ENCODE measurements at regions of chr5 and their contacts with region 1.

Region 1: DNA sequence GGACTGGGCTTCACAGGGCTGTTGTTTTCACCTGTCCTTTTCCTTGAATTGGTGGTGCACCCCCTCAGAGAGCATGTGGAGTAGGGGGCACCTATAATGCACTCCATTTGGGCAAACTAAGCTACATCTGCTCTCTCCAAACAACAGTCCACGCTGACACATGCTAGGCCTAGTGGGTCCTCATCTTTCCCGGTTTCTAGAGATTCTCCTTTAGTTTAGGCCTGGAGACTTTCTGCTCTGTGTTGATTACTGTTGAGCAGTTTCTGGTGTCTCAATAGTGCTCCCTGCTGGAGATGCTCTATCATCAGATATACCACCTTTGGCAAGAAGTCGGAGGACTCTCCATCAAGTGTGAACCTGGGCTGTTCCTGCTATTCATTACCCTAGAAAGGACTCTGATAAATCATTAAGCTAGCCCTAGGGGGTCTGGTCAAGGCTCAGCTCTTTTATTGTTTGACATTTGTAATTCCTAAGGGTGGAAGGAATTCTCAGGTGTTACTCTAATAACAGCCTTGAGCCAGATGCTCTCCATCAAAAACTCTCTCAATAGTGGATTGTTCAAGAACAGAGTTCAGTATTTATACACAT is 64.0 kb upstream of the FYB1 start:
- DNase-seq: peak; percentile 5 to 90 (median 50)
- ATAC-seq: peak; percentile 100
- H3K4me3 ChIP-seq: no peak overlapping the region
- H3K4me3 Mint-ChIP-seq: peak overlapping the region; percentile 17
- H3K27ac ChIP-seq: no peak overlapping the region
- H3K27ac Mint-ChIP-seq: peak overlapping the region; percentile 67
- H3K4me1 ChIP-seq: peaks cover 9% of the 10 kb centered on the region
- H3K4me1 Mint-ChIP-seq: peaks cover 41% of the 10 kb centered on the region
- H3K27me3 ChIP-seq: no peaks in the 10 kb centered on the region
- H3K27me3 Mint-ChIP-seq: peaks cover 9% of the 10 kb centered on the region
- CTCF ChIP-seq: peak; percentile 81

Region 2: DNA sequence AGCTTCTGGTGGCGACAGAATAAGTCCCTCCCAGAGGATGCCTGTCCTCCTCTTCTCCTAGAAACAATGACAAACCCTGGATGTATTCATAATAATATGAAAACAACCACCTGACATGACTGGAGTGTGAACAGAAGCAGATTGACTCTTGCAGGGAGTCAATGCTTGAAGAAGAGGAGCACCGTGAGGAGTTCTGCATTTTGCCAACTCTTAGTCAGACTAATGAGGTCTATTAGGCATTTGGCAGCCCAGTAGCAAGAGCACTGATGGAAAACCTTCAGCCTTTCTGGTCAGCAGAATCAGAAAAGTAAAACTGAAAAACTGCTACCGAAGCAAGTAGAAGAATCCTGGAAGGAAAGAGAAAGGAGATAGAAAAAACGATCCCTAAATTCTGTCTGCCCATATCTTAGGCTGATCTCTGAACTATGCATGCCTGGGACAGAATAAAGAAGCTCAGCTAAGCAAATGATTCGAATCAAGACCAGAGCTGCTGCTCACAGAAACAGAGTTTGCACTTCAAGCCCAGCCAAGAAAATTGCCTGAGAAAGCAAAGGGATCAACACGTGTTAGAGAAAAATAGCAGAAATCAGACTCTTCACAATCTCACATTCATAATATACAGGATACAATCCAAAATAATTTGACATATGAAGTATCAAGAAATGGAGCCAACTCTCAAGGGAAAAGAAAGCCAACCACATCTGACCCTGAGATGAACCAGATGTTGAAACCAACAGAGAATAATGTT is 507.0 kb before region 1 on chr5:
- CTCF ChIA-PET with region 1: no interaction called
- POLR2A ChIA-PET with region 1: no interaction called
- intact Hi-C with region 1: no loop called
- DNase-seq: no peak
- ATAC-seq: no peak
- H3K4me3 ChIP-seq: no peak overlapping the region
- H3K4me3 Mint-ChIP-seq: no peak overlapping the region
- H3K27ac ChIP-seq: no peak overlapping the region
- H3K27ac Mint-ChIP-seq: no peak overlapping the region
- H3K4me1 ChIP-seq: no peaks in the 10 kb centered on the region
- H3K4me1 Mint-ChIP-seq: no peaks in the 10 kb centered on the region
- H3K27me3 ChIP-seq: peaks cover 0 to 3% of the 10 kb centered on the region in 2 experiments
- H3K27me3 Mint-ChIP-seq: peaks cover 33% of the 10 kb centered on the region
- CTCF ChIP-seq: no peak

Region 3: GRCh38 chr5:39005566-39006232 is 277.6 kb before region 1 on chr5:
- CTCF ChIA-PET with region 1: no interaction called
- POLR2A ChIA-PET with region 1: no interaction called
- intact Hi-C with region 1: loop called (anchors 2 to 10 kb)
- DNase-seq: peak in 4 of 14 experiments; percentile 20 to 59 (median 48)
- ATAC-seq: peak; percentile 86
- H3K4me3 ChIP-seq: no peak overlapping the region
- H3K4me3 Mint-ChIP-seq: no peak overlapping the region
- H3K27ac ChIP-seq: no peak overlapping the region
- H3K27ac Mint-ChIP-seq: peak overlapping the region; percentile 64
- H3K4me1 ChIP-seq: peaks cover 4% of the 10 kb centered on the region
- H3K4me1 Mint-ChIP-seq: peaks cover 61% of the 10 kb centered on the region
- H3K27me3 ChIP-seq: no peaks in the 10 kb centered on the region
- H3K27me3 Mint-ChIP-seq: no peaks in the 10 kb centered on the region
- CTCF ChIP-seq: peak; percentile 64

Region 4: GRCh38 chr5:39138892-39139291 is 144.4 kb before region 1 on chr5:
- CTCF ChIA-PET with region 1: interaction called, 6 read pairs
- POLR2A ChIA-PET with region 1: interaction called, 3 read pairs
- intact Hi-C with region 1: loop called in 1 of 2 experiments (anchors 1 kb)
- DNase-seq: no peak
- ATAC-seq: no peak
- H3K4me3 ChIP-seq: no peak overlapping the region
- H3K4me3 Mint-ChIP-seq: no peak overlapping the region
- H3K27ac ChIP-seq: no peak overlapping the region
- H3K27ac Mint-ChIP-seq: peak overlapping the region; percentile 73
- H3K4me1 ChIP-seq: no peaks in the 10 kb centered on the region
- H3K4me1 Mint-ChIP-seq: peaks cover 36% of the 10 kb centered on the region
- H3K27me3 ChIP-seq: no peaks in the 10 kb centered on the region
- H3K27me3 Mint-ChIP-seq: no peaks in the 10 kb centered on the region
- CTCF ChIP-seq: no peak

Region 5: GRCh38 chr5:39148983-39149534 is 134.3 kb before region 1 on chr5:
- CTCF ChIA-PET with region 1: interaction called, 10 read pairs
- POLR2A ChIA-PET with region 1: interaction called, 3 read pairs
- intact Hi-C with region 1: loop called (anchors 1 kb)
- DNase-seq: peak in 3 of 14 experiments; percentile 62 to 74 (median 70)
- ATAC-seq: peak; percentile 62
- H3K4me3 ChIP-seq: no peak overlapping the region
- H3K4me3 Mint-ChIP-seq: peak overlapping the region; percentile 0
- H3K27ac ChIP-seq: peak overlapping the region; percentile 58 to 61
- H3K27ac Mint-ChIP-seq: peak overlapping the region; percentile 86
- H3K4me1 ChIP-seq: peaks cover 51% of the 10 kb centered on the region
- H3K4me1 Mint-ChIP-seq: peaks cover 80% of the 10 kb centered on the region
- H3K27me3 ChIP-seq: no peaks in the 10 kb centered on the region
- H3K27me3 Mint-ChIP-seq: no peaks in the 10 kb centered on the region
- CTCF ChIP-seq: peak; percentile 66

Region 6: DNA sequence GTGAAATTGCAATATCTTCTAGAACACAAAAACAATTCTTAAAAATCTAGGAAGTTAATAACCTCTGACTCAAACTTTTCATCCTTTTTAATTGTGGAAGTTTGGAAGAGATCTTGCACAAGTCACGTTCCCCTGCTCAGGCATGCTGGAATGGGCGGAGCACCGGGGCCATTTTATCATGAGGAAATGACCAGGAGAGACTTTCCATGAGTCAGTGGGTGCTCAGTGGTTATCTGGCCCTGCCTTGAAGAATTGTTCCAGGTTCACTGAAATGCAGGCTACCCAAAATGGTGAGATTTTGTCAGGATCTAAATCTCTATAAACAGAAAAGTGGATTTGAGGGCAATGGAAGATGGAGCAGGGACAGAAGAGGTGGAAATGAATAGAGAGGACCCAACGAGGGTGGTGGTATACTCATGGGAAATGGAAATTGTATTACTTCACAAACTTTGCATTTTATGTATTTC is 125.2 kb before region 1 on chr5:
- CTCF ChIA-PET with region 1: interaction called, 16 read pairs
- POLR2A ChIA-PET with region 1: interaction called, 3 read pairs
- intact Hi-C with region 1: no loop called
- DNase-seq: peak in 2 of 14 experiments; percentile 28 to 31
- ATAC-seq: no peak
- H3K4me3 ChIP-seq: no peak overlapping the region
- H3K4me3 Mint-ChIP-seq: peak overlapping the region; percentile 69
- H3K27ac ChIP-seq: peak overlapping the region; percentile 7 to 55
- H3K27ac Mint-ChIP-seq: peak overlapping the region; percentile 96
- H3K4me1 ChIP-seq: peaks cover 54% of the 10 kb centered on the region
- H3K4me1 Mint-ChIP-seq: peaks cover 91% of the 10 kb centered on the region
- H3K27me3 ChIP-seq: no peaks in the 10 kb centered on the region
- H3K27me3 Mint-ChIP-seq: no peaks in the 10 kb centered on the region
- CTCF ChIP-seq: no peak

Region 7: DNA sequence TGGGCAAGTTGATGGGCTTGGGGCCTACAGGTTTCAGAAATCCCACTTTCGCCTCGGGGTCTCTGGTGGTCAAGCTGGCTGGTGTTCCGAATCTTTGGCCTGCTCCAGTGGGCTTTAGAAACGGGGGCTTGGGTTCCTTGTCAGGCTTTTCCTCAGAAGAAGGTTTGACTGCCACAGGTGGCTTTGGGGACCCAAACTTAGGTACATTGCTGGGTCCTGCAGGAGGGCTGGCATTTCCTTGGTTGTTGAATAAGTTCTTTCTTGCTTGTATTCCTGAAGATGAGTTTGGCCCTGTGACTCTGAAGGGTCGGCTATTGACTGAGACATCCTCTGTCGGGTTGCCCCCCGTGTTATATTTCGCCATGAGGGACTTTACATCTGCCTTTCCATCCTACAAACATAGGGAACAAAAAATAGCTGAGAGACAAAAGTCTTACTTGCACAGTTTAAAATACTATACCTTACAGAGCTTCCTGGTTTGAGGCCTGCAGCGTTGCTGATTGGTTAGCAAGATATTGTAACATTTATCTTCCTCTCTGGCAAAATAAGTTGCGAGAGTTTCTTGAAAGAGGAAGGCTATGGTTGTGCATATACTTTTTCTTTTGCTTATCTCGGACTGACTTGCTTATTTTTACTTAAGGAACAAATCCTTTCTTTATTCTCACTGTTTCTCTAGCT is 80.6 kb before region 1 on chr5:
- CTCF ChIA-PET with region 1: interaction called, 19 read pairs
- POLR2A ChIA-PET with region 1: no interaction called
- intact Hi-C with region 1: loop called in 1 of 2 experiments (anchors 5 kb)
- DNase-seq: peak in 6 of 14 experiments; percentile 35 to 83 (median 68)
- ATAC-seq: peak; percentile 62
- H3K4me3 ChIP-seq: peak overlapping the region; percentile 76
- H3K4me3 Mint-ChIP-seq: peak overlapping the region; percentile 93
- H3K27ac ChIP-seq: peak overlapping the region; percentile 82
- H3K27ac Mint-ChIP-seq: peak overlapping the region; percentile 96
- H3K4me1 ChIP-seq: peaks cover 28% of the 10 kb centered on the region
- H3K4me1 Mint-ChIP-seq: peaks cover 45% of the 10 kb centered on the region
- H3K27me3 ChIP-seq: no peaks in the 10 kb centered on the region
- H3K27me3 Mint-ChIP-seq: no peaks in the 10 kb centered on the region
- CTCF ChIP-seq: no peak

Region 8: DNA sequence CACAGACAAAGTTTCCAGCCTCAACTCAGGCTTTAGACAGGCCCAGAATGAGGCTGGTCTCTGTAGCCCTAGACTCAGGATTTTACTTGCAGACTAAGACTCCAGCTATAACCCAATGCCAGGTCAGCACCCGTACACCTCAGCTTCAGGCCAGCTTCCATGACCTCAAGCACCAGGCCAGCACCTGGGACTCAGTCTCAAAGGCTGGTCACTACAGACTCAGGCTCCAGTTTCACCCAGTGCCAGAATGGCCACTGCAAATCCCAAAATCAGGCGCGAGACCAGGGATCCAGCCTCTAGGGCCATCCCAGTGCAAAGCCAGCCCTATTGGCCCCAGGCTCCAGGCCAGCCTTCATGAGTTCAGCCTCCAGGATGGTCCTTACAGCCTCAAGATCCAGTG is 36.1 kb after region 1 on chr5:
- CTCF ChIA-PET with region 1: no interaction called
- POLR2A ChIA-PET with region 1: no interaction called
- intact Hi-C with region 1: no loop called
- DNase-seq: no peak
- ATAC-seq: no peak
- H3K4me3 ChIP-seq: no peak overlapping the region
- H3K4me3 Mint-ChIP-seq: no peak overlapping the region
- H3K27ac ChIP-seq: no peak overlapping the region
- H3K27ac Mint-ChIP-seq: no peak overlapping the region
- H3K4me1 ChIP-seq: no peaks in the 10 kb centered on the region
- H3K4me1 Mint-ChIP-seq: no peaks in the 10 kb centered on the region
- H3K27me3 ChIP-seq: peaks cover 0 to 5% of the 10 kb centered on the region in 2 experiments
- H3K27me3 Mint-ChIP-seq: peaks cover 17% of the 10 kb centered on the region
- CTCF ChIP-seq: no peak

Measured in CD4-positive, alpha-beta T cell (primary cell).